CD14-positive monocyte (primary cell): ENCODE measurements at regions of chr5 and their contacts with region 1.

Region 1: GRCh38 chr5:10701567-10702039 is 59.4 kb downstream of the DAP start:
- DNase-seq: peak; percentile 21 to 47 (median 41)
- H3K4me3 ChIP-seq: no peak overlapping the region
- H3K4me3 Mint-ChIP-seq: no peak overlapping the region
- H3K27ac ChIP-seq: no peak overlapping the region
- H3K27ac Mint-ChIP-seq: peak overlapping the region in 2 of 7 donors; percentile 25 to 49
- H3K4me1 ChIP-seq: peaks cover 18 to 23% of the 10 kb centered on the region in 2 donors
- H3K4me1 Mint-ChIP-seq: peaks cover 24% of the 10 kb centered on the region
- H3K27me3 ChIP-seq: no peaks in the 10 kb centered on the region
- H3K27me3 Mint-ChIP-seq: peaks cover 0 to under 1% (median 0%) of the 10 kb centered on the region in 3 donors
- CTCF ChIP-seq: peak; percentile 90

Region 2: GRCh38 chr5:10424124-10424731 is 277.4 kb before region 1 on chr5:
- intact Hi-C with region 1: no loop called
- DNase-seq: peak; percentile 34 to 50 (median 46)
- H3K4me3 ChIP-seq: no peak overlapping the region
- H3K4me3 Mint-ChIP-seq: no peak overlapping the region
- H3K27ac ChIP-seq: no peak overlapping the region
- H3K27ac Mint-ChIP-seq: peak overlapping the region in 2 of 7 donors; percentile 46 to 52
- H3K4me1 ChIP-seq: peaks cover 33 to 38% of the 10 kb centered on the region in 2 donors
- H3K4me1 Mint-ChIP-seq: peaks cover 40% of the 10 kb centered on the region
- H3K27me3 ChIP-seq: no peaks in the 10 kb centered on the region
- H3K27me3 Mint-ChIP-seq: no peaks in the 10 kb centered on the region
- CTCF ChIP-seq: peak; percentile 64

Region 3: DNA sequence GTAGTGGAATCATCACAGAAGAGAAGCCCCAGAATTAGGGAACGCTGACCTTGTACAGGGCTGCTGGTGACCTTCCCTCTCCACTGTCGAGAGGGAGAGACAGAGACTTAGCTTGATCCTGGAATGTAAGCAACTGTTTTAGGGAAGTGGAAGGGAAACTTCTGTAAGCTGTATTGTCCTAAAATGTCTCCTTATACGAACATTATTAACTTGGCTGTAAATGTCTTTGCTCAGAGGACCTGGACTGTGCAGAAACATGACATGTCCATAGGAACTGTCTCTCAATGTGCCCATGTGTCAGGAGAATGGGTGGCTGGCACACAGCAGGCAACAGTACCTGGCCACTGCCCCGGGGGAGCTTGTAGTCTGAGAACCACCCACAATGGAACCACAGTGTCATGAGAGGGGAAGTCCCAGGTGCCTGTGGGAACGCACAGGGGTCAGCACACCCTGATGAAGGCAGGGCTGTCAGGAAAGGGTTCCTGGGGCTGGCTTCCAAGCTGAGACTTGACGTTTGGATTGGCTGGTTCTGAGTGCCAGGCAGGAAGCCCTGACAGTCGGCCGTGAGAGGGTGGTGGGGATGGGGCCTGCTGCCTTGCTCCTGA is 25.4 kb after region 1 on chr5:
- intact Hi-C with region 1: no loop called
- DNase-seq: peak in 1 of 3 donors; percentile 54
- H3K4me3 ChIP-seq: no peak overlapping the region
- H3K4me3 Mint-ChIP-seq: no peak overlapping the region
- H3K27ac ChIP-seq: peak overlapping the region; percentile 26 to 65
- H3K27ac Mint-ChIP-seq: peak overlapping the region; percentile 74 to 86 (median 82)
- H3K4me1 ChIP-seq: peaks cover 20 to 23% of the 10 kb centered on the region in 2 donors
- H3K4me1 Mint-ChIP-seq: peaks cover 29% of the 10 kb centered on the region
- H3K27me3 ChIP-seq: no peaks in the 10 kb centered on the region
- H3K27me3 Mint-ChIP-seq: no peaks in the 10 kb centered on the region
- CTCF ChIP-seq: no peak

Region 4: DNA sequence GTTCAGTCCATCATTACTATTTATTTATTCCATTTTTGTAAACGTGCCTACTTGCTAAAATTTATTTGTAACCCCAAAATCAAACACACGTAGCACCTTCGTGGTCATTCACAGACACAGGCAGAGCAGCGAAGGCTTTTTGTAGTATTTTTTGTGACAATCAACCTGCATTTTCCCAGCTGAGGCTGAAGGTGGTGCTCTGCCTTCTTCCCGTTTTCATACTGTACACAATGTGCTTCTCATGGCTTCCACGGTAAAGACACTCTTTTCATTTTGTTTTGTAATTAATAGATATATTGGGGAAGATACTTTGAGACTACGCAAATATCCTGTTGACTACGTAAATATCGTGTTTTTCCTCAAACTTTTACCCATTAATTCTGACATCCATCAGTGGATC is 40.1 kb after region 1 on chr5:
- intact Hi-C with region 1: loop called in 1 of 2 experiments (anchors 5 kb)
- DNase-seq: no peak
- H3K4me3 ChIP-seq: no peak overlapping the region
- H3K4me3 Mint-ChIP-seq: no peak overlapping the region
- H3K27ac ChIP-seq: no peak overlapping the region
- H3K27ac Mint-ChIP-seq: no peak overlapping the region
- H3K4me1 ChIP-seq: peaks cover 12 to 18% of the 10 kb centered on the region in 2 donors
- H3K4me1 Mint-ChIP-seq: peaks cover 21% of the 10 kb centered on the region
- H3K27me3 ChIP-seq: no peaks in the 10 kb centered on the region
- H3K27me3 Mint-ChIP-seq: no peaks in the 10 kb centered on the region
- CTCF ChIP-seq: peak; percentile 21

Region 5: DNA sequence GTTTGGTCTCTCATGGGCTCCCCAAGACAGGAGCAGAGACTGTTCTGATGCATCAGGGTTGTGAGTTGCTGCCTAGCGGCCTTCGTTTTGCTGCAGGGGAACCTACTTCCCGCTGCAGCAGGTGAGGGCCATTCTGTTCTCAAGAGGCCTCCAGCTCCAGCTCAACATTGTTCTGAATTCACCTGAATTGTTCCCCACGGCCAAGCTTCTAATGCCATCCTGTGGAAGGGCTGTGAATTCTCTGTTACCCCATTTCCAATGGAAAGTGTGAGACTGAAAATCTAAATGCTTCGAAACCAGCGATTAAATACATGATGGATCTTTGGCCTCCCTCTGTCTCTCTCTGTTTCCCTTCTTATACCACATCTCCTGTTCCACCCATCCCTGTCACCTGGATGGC is 408.5 kb after region 1 on chr5:
- intact Hi-C with region 1: no loop called
- DNase-seq: no peak
- H3K4me3 ChIP-seq: no peak overlapping the region
- H3K4me3 Mint-ChIP-seq: no peak overlapping the region
- H3K27ac ChIP-seq: no peak overlapping the region
- H3K27ac Mint-ChIP-seq: no peak overlapping the region
- H3K4me1 ChIP-seq: no peaks in the 10 kb centered on the region
- H3K4me1 Mint-ChIP-seq: no peaks in the 10 kb centered on the region
- H3K27me3 ChIP-seq: no peaks in the 10 kb centered on the region
- H3K27me3 Mint-ChIP-seq: peaks cover 0 to 4% (median 2%) of the 10 kb centered on the region in 3 donors
- CTCF ChIP-seq: no peak